Mammary epithelial cell (primary cell): ENCODE measurements at regions of chr1 and their contacts with region 1.

Region 1: GRCh38 chr1:221741711-221742554 is at the start of gene DUSP10:
- DNase-seq: peak; percentile 99
- H3K4me3 ChIP-seq: peak within 1 kb of the TSS; percentile 63 to 85 (median 80)
- H3K27ac ChIP-seq: peak within 1 kb of the TSS; percentile 96
- H3K4me1 ChIP-seq: peaks cover 35% of the 10 kb centered on the region
- H3K27me3 ChIP-seq: no peaks in the 10 kb centered on the region
- CTCF ChIP-seq: no peak
- total RNA-seq, gene DUSP10: 35.4 to 118 TPM

Region 2: GRCh38 chr1:221074301-221074700 is 667.6 kb before region 1 on chr1:
- CTCF ChIA-PET with region 1: no interaction called
- dilution Hi-C with region 1: no loop called
- in situ Hi-C with region 1: no loop called
- intact Hi-C with region 1: no loop called
- DNase-seq: no peak
- H3K4me3 ChIP-seq: no peak overlapping the region
- H3K27ac ChIP-seq: no peak overlapping the region
- H3K4me1 ChIP-seq: no peaks in the 10 kb centered on the region
- H3K27me3 ChIP-seq: no peaks in the 10 kb centered on the region
- CTCF ChIP-seq: no peak

Region 3: GRCh38 chr1:221263831-221264767 is 477.8 kb before region 1 on chr1:
- CTCF ChIA-PET with region 1: no interaction called
- dilution Hi-C with region 1: no loop called
- in situ Hi-C with region 1: no loop called
- intact Hi-C with region 1: loop called (anchors 10 kb)
- DNase-seq: peak; percentile 61
- H3K4me3 ChIP-seq: no peak overlapping the region
- H3K27ac ChIP-seq: no peak overlapping the region
- H3K4me1 ChIP-seq: no peaks in the 10 kb centered on the region
- H3K27me3 ChIP-seq: peaks cover 2% of the 10 kb centered on the region
- CTCF ChIP-seq: peak; percentile 66 to 75

Region 4: GRCh38 chr1:221543529-221544120 is 198.3 kb before region 1 on chr1:
- CTCF ChIA-PET with region 1: interaction called, 9 read pairs
- dilution Hi-C with region 1: no loop called
- in situ Hi-C with region 1: no loop called
- intact Hi-C with region 1: loop called (anchors 1 kb)
- DNase-seq: peak; percentile 25
- H3K4me3 ChIP-seq: no peak overlapping the region
- H3K27ac ChIP-seq: no peak overlapping the region
- H3K4me1 ChIP-seq: peaks cover 13% of the 10 kb centered on the region
- H3K27me3 ChIP-seq: no peaks in the 10 kb centered on the region
- CTCF ChIP-seq: peak; percentile 37 to 68

Region 5: GRCh38 chr1:221809031-221810029 is 67.4 kb after region 1 on chr1:
- CTCF ChIA-PET with region 1: no interaction called
- dilution Hi-C with region 1: no loop called
- in situ Hi-C with region 1: no loop called
- intact Hi-C with region 1: no loop called
- DNase-seq: no peak
- H3K4me3 ChIP-seq: no peak overlapping the region
- H3K27ac ChIP-seq: peak overlapping the region; percentile 33
- H3K4me1 ChIP-seq: peaks cover 28% of the 10 kb centered on the region
- H3K27me3 ChIP-seq: no peaks in the 10 kb centered on the region
- CTCF ChIP-seq: no peak

Region 6: DNA sequence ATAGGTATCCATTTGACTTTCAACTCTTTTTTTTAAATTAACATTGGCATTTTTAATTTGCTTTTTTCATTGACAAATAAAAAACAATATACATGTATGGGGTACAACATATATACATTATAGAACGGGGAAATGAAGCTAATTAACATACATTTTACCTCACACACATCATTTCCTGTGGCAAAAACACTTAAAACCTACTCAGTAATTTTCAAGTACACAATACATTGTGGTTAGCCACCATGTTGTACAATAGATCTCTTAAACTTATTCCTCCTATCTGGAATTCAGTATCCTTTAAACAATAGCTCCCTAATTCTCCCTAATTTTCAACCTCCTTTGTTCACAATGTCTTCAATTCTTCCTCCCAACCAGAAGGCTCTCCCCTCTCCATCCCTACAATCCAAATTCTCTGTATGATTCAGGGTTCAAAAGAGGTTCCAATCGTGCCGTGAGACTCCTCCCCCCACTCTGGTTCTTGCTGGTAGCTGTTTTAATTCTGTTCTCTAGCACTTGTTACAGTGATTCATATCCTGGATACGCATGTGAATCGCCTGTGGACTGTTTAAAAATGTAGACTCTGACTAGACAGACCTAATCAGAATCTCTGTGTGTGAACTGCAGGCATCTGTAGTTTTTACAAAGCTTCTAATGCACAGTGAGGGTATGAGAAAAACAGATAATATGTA is 87.5 kb after region 1 on chr1:
- CTCF ChIA-PET with region 1: no interaction called
- dilution Hi-C with region 1: no loop called
- in situ Hi-C with region 1: no loop called
- intact Hi-C with region 1: loop called (anchors 2 kb)
- DNase-seq: peak; percentile 96
- H3K4me3 ChIP-seq: no peak overlapping the region
- H3K27ac ChIP-seq: peak overlapping the region; percentile 91
- H3K4me1 ChIP-seq: peaks cover 74% of the 10 kb centered on the region
- H3K27me3 ChIP-seq: no peaks in the 10 kb centered on the region
- CTCF ChIP-seq: no peak

Region 7: DNA sequence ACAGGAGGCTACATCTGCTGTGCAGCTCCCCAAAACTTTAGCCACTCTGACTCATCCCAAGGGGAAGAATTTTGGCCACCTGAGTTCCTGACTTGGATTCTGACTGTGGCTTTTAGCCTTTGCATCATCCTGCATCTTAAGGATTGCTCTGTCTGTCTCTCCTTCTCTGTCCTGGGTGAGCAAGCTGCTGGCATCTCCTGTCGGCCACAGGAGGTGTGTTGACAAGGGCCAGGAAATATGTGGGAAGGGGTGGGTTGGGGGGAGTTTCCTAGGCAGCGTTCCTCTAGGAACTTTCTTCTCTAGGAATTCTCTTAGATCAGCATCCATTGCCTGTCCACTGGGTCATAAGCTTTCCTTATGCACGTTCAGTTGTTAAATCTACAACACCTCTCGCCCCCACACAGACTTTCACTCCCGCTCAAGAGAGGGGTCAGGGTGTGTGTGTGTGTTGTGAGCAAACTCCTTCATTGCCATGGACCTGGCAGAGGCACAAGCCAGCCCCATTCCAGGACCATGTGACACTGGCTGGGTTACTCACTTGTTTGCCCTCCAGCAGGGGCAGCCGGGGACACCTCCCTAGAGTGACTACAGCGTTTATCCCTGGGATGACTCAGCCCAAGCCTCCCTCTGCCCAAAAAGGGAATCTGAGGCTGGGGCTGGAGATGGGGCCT is 144.9 kb after region 1 on chr1:
- CTCF ChIA-PET with region 1: no interaction called
- dilution Hi-C with region 1: no loop called
- in situ Hi-C with region 1: no loop called
- intact Hi-C with region 1: loop called (anchors 1 kb)
- DNase-seq: peak; percentile 100
- H3K4me3 ChIP-seq: no peak overlapping the region
- H3K27ac ChIP-seq: peak overlapping the region; percentile 93
- H3K4me1 ChIP-seq: peaks cover 46% of the 10 kb centered on the region
- H3K27me3 ChIP-seq: no peaks in the 10 kb centered on the region
- CTCF ChIP-seq: peak in 1 of 2 donors; percentile 49

Region 8: DNA sequence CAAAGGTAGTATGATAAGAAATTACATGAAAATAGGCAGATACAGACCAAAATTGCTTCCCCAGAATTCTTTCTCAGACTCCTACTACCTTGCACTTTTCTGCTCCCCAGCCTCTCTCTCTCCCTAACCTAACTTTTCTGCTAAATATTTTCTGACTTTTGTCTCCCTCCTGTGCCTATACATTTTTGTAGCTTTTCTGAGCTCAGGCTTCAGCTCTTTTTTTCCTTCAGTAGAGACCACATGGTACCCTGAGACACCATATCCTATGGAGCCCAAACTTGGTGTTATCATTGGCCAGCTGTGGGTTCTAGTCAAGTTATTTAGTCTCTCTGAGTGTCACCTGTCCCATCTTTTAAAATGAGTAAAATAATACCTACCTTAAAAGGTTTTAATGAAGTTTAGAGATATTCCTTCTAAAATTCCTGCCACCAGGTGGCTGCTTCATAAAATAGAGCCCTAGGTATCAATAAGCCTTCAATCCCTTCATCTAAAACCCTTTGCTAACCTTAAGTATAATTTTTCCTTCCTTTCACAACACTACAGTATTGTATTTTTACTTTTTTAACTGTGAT is 237.6 kb after region 1 on chr1:
- CTCF ChIA-PET with region 1: interaction called, 4 read pairs
- dilution Hi-C with region 1: no loop called
- in situ Hi-C with region 1: no loop called
- intact Hi-C with region 1: loop called (anchors 2 kb)
- DNase-seq: no peak
- H3K4me3 ChIP-seq: no peak overlapping the region
- H3K27ac ChIP-seq: no peak overlapping the region
- H3K4me1 ChIP-seq: peaks cover 14% of the 10 kb centered on the region
- H3K27me3 ChIP-seq: no peaks in the 10 kb centered on the region
- CTCF ChIP-seq: peak; percentile 36 to 41

Region 9: GRCh38 chr1:222455188-222455879 is 713.4 kb after region 1 on chr1:
- CTCF ChIA-PET with region 1: no interaction called
- dilution Hi-C with region 1: no loop called
- in situ Hi-C with region 1: loop called in 1 of 2 experiments (anchors 5 kb)
- intact Hi-C with region 1: loop called (anchors 1 kb)
- DNase-seq: peak; percentile 81
- H3K4me3 ChIP-seq: peak overlapping the region; percentile 2 to 14 (median 10)
- H3K27ac ChIP-seq: peak overlapping the region; percentile 72
- H3K4me1 ChIP-seq: peaks cover 14% of the 10 kb centered on the region
- H3K27me3 ChIP-seq: no peaks in the 10 kb centered on the region
- CTCF ChIP-seq: peak; percentile 97 to 99